Sciatic nerve (tissue), 2 donors: ENCODE measurements at regions of chr2 and their contacts with region 1.

Region 1: GRCh38 chr2:96868555-96869280 is 1.2 kb downstream of the SEMA4C start:
- DNase-seq: peak; percentile 94
- ATAC-seq: peak; percentile 85

Region 2: DNA sequence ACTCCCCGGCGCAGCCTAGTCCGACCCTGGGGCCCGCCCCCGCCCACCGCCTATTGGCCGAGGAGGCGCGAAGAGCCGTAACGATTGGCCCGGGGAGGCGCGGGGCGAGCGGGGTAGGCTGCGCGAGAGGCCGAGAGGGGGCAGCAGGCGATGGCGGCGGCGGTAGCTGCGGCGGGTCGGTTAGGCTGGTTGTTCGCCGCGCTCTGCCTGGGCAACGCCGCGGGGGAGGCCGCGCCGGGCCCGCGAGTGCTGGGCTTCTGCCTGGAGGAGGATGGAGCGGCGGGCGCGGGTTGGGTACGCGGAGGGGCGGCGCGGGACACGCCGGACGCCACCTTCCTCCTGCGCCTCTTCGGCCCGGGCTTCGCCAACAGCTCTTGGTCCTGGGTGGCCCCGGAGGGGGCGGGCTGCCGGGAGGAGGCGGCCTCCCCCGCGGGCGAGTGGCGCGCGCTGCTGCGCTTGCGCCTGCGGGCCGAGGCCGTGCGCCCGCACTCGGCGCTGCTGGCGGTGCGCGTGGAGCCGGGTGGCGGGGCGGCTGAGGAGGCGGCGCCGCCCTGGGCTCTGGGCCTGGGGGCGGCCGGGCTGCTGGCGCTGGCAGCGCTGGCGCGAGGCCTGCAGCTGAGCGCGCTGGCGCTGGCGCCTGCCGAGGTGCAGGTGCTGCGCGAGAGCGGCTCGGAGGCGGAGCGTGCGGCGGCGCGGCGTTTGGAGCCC is 52.4 kb before region 1 on chr2 and contains the start of gene CNNM3:
- intact Hi-C with region 1: loop called (anchors 10 kb)
- DNase-seq: peak; percentile 98
- ATAC-seq: peak; percentile 97
- total RNA-seq, gene CNNM3: 26.4 TPM

Region 3: GRCh38 chr2:96951093-96951654 is 82.5 kb after region 1 on chr2:
- intact Hi-C with region 1: loop called (anchors 5 kb)
- DNase-seq: peak; percentile 82
- ATAC-seq: peak; percentile 76